Common myeloid progenitor, CD34-positive (primary cell): ENCODE measurements at regions of chr2 and their contacts with region 1.

Region 1: GRCh38 chr2:38554973-38555595 is 47.6 kb downstream of the HNRNPLL start:
- DNase-seq: peak in 2 of 3 donors; percentile 37 to 40
- H3K4me3 ChIP-seq: no peak overlapping the region
- H3K27ac ChIP-seq: no peak overlapping the region
- H3K4me1 ChIP-seq: peaks cover 0 to 15% (median 11%) of the 10 kb centered on the region in 4 experiments
- H3K27me3 ChIP-seq: no peaks in the 10 kb centered on the region

Region 2: GRCh38 chr2:38535744-38536506 is 19.2 kb before region 1 on chr2:
- CTCF ChIA-PET with region 1: interaction called, 10 read pairs
- POLR2A ChIA-PET with region 1: interaction called, 3 read pairs
- DNase-seq: peak; percentile 67 to 79 (median 78)
- H3K4me3 ChIP-seq: peak overlapping the region; percentile 31 to 82 (median 57)
- H3K27ac ChIP-seq: no peak overlapping the region
- H3K4me1 ChIP-seq: peaks cover 0 to 8% (median 4%) of the 10 kb centered on the region in 4 experiments
- H3K27me3 ChIP-seq: peaks cover 0 to 14% (median 8%) of the 10 kb centered on the region in 5 experiments

Region 3: DNA sequence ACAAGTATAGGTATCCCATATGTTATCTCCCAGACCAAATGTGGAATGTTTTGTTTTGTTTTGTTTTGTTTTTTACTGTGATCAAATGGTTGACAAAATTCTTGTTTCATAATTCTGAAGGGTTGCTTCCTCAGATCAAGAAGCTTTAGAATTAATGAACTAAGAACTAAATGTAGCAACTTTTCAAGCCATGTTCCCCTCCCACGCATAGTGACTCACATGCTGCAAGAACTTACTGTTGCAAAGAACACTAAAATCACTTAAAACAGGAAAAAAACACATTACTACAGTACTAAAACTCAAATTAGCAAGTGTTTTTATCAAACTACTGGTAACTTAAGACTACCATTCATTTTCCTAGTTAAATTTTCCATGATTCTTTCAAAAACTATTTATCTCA is 17.1 kb after region 1 on chr2:
- CTCF ChIA-PET with region 1: interaction called, 39 read pairs
- POLR2A ChIA-PET with region 1: interaction called, 4 read pairs
- DNase-seq: no peak
- H3K4me3 ChIP-seq: no peak overlapping the region
- H3K27ac ChIP-seq: no peak overlapping the region
- H3K4me1 ChIP-seq: peaks cover 0 to 3% (median 0%) of the 10 kb centered on the region in 4 experiments
- H3K27me3 ChIP-seq: no peaks in the 10 kb centered on the region

Region 4: DNA sequence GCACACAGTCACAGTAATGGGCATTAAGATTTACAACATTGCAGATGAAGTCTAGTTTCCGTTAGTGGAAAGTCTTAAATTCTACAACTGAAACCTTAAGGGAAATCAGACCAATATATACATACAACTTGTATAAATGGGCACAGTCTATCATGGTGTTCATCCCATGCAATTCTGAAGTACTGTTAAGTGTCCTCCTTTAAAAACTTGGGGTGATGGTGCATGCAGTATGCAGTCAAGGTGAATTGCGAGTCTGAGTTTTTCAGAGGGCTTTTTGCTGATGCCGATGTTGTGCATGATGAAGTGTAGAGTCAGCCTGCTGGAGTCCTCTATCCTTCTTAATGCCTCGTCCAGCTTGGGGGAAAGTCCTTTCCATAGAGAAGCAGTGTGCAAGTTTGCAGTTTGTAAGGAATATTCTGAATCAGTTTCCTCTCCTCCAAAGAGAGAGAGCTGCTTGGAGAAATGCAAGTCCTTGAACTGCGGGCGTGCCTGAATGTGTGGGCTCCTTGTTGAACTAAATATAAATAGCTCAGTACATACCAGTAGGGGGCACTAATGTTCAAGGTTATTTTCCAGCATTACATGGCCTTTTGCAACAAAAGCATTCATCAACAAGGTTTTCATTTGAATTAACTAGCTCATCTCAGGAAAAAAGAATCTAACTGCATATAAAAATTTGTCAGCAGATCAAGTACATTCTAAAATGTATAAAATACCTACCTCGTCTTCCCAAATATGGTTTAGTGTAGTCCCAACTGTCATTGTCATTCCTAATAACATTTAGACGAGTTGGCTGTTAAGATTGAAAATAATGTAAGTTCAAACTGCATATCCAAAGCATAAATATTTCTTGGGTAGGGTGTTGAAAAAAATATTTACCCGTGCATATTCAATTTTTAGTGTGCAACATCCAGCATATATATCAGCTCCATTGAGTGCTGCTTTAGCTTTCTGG is 26.4 kb after region 1 on chr2:
- CTCF ChIA-PET with region 1: interaction called, 14 read pairs
- POLR2A ChIA-PET with region 1: interaction called, 4 read pairs
- DNase-seq: peak; percentile 79 to 91 (median 85)
- H3K4me3 ChIP-seq: no peak overlapping the region
- H3K27ac ChIP-seq: no peak overlapping the region
- H3K4me1 ChIP-seq: peaks cover 0 to 3% (median 0%) of the 10 kb centered on the region in 4 experiments
- H3K27me3 ChIP-seq: no peaks in the 10 kb centered on the region

Region 5: DNA sequence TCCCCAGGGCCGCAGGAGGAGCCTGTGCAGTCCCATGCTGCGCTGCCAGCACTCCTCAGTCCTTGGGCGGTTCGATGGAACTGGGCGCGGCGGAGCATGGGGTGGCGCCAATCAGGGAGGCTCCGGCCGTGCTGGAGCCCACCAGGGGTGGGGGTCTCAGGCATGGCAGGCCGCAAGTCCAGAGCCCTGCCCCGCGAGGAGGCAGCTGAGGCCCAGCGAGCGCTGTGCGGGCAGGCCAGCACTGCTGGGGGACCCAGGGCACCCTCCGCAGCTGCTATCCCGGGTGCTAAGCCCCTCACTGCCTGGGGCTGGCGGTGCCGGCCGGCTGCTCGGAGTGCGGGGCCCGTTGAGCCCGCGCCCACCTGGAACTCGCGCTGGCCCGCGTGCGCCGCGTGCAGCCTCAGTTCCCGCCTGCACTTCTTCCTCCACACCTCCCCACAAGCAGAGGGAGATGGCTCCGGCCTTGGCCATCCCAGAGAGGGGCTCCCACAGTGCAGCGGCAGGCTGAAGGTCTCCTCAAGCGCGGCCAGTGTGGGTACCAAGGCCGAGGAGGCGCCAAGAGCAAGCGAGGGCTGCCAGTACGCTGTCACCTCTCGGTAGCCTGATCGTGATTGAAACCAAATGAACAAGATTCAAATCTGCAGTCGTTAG is 88.1 kb after region 1 on chr2:
- CTCF ChIA-PET with region 1: no interaction called
- POLR2A ChIA-PET with region 1: no interaction called
- DNase-seq: no peak
- H3K4me3 ChIP-seq: no peak overlapping the region
- H3K27ac ChIP-seq: peak overlapping the region; percentile 50 to 85
- H3K4me1 ChIP-seq: peaks cover 6 to 25% (median 19%) of the 10 kb centered on the region in 4 experiments
- H3K27me3 ChIP-seq: no peaks in the 10 kb centered on the region

Region 6: DNA sequence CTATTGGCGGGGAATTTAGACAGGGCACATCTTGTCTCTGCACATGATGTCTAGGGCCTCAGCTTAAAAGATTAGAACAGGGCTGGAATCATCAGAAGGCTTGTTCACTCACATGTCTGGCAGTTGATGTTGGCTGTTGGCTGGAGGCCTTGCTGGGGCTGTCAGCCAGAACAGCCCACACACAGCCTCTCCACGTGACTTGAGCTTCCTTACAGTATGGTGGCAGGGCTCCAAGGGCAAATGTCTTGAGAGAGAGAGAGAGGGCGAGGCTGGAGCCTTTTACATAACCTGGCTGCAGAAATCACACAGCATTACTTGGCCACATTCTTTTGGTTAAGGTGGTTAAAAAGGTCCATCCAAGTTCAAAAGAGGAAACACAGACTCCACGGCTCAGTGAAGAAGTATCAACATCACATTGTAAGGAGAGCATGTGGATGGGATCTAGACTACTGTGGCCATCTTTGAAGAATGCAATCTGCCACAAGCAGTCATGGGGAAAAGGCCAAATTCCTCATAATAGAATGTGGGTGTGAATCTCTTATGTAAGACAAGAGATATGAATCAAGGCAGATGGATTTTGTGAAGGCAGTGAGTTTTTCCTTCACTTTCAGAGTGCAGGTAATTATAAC is 165.6 kb after region 1 on chr2:
- CTCF ChIA-PET with region 1: interaction called, 11 read pairs
- POLR2A ChIA-PET with region 1: no interaction called
- DNase-seq: peak in 2 of 3 donors; percentile 41 to 53
- H3K4me3 ChIP-seq: no peak overlapping the region
- H3K27ac ChIP-seq: no peak overlapping the region
- H3K4me1 ChIP-seq: peaks cover 7 to 24% (median 16%) of the 10 kb centered on the region in 4 experiments
- H3K27me3 ChIP-seq: no peaks in the 10 kb centered on the region

Region 7: DNA sequence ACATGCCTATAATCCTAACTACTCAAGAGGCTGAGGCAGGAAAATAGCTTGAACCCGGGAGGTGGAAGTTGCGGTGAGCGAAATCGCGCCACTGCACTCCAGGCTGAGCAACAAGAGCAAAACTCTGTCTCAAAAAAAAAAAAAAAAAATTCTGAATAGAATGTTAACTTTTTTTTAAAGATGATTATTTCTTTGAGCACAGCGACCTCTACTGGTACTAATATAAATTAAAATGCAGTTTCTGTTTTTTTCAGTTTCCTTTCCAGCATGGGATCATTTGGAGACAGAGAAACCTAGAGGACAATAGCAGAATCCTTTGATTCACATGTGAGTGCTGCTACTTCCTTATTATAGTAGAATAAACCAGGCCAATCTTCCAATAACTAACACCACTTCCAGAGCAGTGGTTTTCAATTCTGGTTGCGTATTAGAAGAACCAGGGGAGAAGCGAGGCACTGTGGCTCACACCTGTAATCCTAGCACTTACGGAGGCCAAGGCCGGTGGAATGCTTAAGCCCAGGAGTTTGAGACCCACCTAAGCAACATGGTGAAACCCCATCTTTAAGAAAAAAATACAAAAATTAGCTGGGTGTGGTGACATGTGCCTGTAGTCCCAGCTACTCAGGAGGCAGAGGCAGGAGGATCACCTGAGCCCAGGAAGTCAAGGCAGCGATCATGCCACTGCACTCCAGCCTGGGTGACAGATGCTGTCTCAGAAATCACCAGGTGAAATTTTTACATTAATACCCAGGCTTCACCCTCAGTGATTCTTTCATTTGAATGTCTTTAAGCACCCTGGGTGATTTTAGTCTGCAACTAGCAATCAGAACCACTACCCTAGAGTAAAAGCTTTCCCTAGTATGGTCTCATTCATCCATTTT is 186.0 kb after region 1 on chr2:
- CTCF ChIA-PET with region 1: interaction called, 11 read pairs
- POLR2A ChIA-PET with region 1: interaction called, 5 read pairs
- DNase-seq: peak; percentile 67 to 85 (median 82)
- H3K4me3 ChIP-seq: no peak overlapping the region
- H3K27ac ChIP-seq: no peak overlapping the region
- H3K4me1 ChIP-seq: peaks cover 0 to 4% (median 1%) of the 10 kb centered on the region in 4 experiments
- H3K27me3 ChIP-seq: no peaks in the 10 kb centered on the region